B cell (primary cell): ENCODE measurements at regions of chr12 and their contacts with region 1.

Region 1: GRCh38 chr12:52023182-52023975 is 16.6 kb downstream of the TAMALIN start:
- DNase-seq: peak; percentile 93
- ATAC-seq: peak; percentile 71
- H3K4me3 ChIP-seq: peak overlapping the region in 4 of 5 experiments; percentile 53 to 77 (median 60)
- H3K4me3 Mint-ChIP-seq: peak overlapping the region; percentile 88
- H3K27ac ChIP-seq: peak overlapping the region in 1 of 2 donors; percentile 31
- H3K27ac Mint-ChIP-seq: peak overlapping the region; percentile 53
- H3K4me1 ChIP-seq: peaks cover 35 to 56% of the 10 kb centered on the region in 2 donors
- H3K4me1 Mint-ChIP-seq: peaks cover 52% of the 10 kb centered on the region
- H3K27me3 ChIP-seq: no peaks in the 10 kb centered on the region
- H3K27me3 Mint-ChIP-seq: no peaks in the 10 kb centered on the region
- CTCF ChIP-seq: peak; percentile 93

Region 2: DNA sequence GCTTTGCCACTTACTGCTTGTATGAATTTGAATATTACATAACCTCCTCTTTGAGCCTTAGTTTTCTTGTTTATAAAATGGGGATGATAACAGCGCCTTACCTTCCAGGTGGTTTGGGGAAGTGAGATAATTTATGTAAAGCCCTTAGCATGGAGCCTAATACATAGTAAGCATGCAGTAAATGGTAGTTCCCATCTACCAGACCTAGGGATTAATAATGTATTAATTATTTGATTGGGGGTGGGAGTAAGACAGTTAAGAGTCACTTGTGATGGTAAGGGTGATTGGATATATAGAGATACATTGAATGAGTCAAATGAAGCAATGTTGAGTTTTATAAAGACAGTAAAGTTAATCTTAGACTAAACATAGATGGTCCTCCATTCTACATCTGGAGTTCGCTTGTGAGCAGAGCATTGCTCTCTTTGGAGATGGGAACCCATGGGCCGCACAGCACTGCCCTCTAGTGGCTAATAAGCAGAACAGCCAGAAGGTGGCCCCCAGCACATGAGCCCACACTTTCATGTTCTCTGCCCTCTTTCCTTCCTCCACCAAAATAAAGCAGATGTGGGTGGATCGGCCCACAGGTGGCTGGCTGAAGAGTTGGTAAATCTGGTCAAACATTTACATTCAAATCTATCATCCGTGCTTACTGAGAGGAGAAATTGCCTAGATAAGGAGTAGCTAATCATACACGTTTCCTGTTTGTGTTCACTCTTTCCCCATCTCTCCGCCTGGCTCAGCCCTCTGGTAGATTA is 43.1 kb before region 1 on chr12:
- CTCF ChIA-PET with region 1: interaction called, 707 read pairs
- POLR2A ChIA-PET with region 1: interaction called, 7 read pairs
- intact Hi-C with region 1: no loop called
- DNase-seq: peak; percentile 84
- ATAC-seq: peak; percentile 97
- H3K4me3 ChIP-seq: no peak overlapping the region
- H3K4me3 Mint-ChIP-seq: no peak overlapping the region
- H3K27ac ChIP-seq: no peak overlapping the region
- H3K27ac Mint-ChIP-seq: no peak overlapping the region
- H3K4me1 ChIP-seq: peaks cover 3 to 6% of the 10 kb centered on the region in 2 donors
- H3K4me1 Mint-ChIP-seq: peaks cover 10% of the 10 kb centered on the region
- H3K27me3 ChIP-seq: no peaks in the 10 kb centered on the region
- H3K27me3 Mint-ChIP-seq: no peaks in the 10 kb centered on the region
- CTCF ChIP-seq: peak; percentile 94

Region 3: GRCh38 chr12:52004042-52004648 is 19.2 kb before region 1 on chr12:
- CTCF ChIA-PET with region 1: interaction called, 707 read pairs
- POLR2A ChIA-PET with region 1: interaction called, 28 read pairs
- intact Hi-C with region 1: loop called (anchors 1 kb)
- DNase-seq: peak; percentile 51
- ATAC-seq: no peak
- H3K4me3 ChIP-seq: no peak overlapping the region
- H3K4me3 Mint-ChIP-seq: no peak overlapping the region
- H3K27ac ChIP-seq: no peak overlapping the region
- H3K27ac Mint-ChIP-seq: no peak overlapping the region
- H3K4me1 ChIP-seq: peaks cover 26 to 32% of the 10 kb centered on the region in 2 donors
- H3K4me1 Mint-ChIP-seq: peaks cover 37% of the 10 kb centered on the region
- H3K27me3 ChIP-seq: no peaks in the 10 kb centered on the region
- H3K27me3 Mint-ChIP-seq: no peaks in the 10 kb centered on the region
- CTCF ChIP-seq: peak; percentile 3

Region 4: DNA sequence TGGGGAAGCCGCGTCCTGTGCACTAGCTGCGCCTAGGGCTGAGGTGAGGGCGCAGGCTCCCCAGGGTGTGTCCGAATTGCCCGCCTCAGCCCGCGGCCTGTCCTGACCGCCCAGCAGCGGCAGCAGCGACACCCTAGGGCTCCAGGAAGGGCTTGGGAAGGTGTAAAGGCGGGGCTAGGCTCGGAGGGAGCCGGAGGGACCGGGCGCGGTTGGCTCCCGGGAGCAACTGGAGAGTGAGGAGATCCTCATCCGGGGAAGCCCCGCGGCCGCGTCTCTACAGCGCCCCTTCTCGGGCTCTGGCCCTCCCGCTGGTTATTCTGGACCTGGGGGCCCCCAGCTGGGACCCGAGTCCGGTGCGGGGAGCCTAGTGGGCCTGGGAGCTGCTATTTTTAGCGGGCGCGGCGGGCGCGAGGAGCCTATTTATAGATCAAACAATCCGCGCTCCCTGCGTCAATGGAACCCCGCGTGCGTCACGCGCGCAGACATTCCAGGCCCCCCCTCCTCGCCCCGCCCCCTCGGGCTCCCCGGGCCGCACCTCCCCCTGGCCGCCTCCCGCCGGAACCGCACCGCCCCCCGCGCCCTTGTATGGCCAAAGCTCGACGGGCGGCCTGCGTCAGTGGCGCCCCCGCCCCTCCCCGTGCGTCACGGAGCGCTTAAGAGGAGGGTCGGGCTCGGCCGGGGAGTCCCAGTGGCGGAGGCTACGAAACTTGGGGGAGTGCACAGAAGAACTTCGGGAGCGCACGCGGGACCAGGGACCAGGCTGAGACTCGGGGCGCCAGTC is 27.6 kb after region 1 on chr12 and contains the start of gene NR4A1:
- CTCF ChIA-PET with region 1: interaction called, 49 read pairs
- POLR2A ChIA-PET with region 1: interaction called, 17 read pairs
- intact Hi-C with region 1: loop called (anchors 1 kb)
- DNase-seq: peak; percentile 99
- ATAC-seq: peak; percentile 80
- H3K4me3 ChIP-seq: peak within 1 kb of the TSS; percentile 73 to 92 (median 86)
- H3K4me3 Mint-ChIP-seq: peak within 1 kb of the TSS; percentile 100
- H3K27ac ChIP-seq: peak within 1 kb of the TSS; percentile 99 to 100
- H3K27ac Mint-ChIP-seq: peak within 1 kb of the TSS; percentile 99
- H3K4me1 ChIP-seq: peaks cover 25 to 38% of the 10 kb centered on the region in 2 donors
- H3K4me1 Mint-ChIP-seq: peaks cover 45% of the 10 kb centered on the region
- H3K27me3 ChIP-seq: no peaks in the 10 kb centered on the region
- H3K27me3 Mint-ChIP-seq: no peaks in the 10 kb centered on the region
- CTCF ChIP-seq: no peak
- total RNA-seq, gene NR4A1: 43.2 and 52.8 TPM in 2 replicates

Region 5: GRCh38 chr12:52082988-52083637 is 59.7 kb after region 1 on chr12:
- CTCF ChIA-PET with region 1: interaction called, 1,315 read pairs
- POLR2A ChIA-PET with region 1: interaction called, 14 read pairs
- intact Hi-C with region 1: loop called (anchors 1 kb)
- DNase-seq: peak; percentile 80
- ATAC-seq: peak; percentile 53
- H3K4me3 ChIP-seq: no peak overlapping the region
- H3K4me3 Mint-ChIP-seq: peak overlapping the region; percentile 74
- H3K27ac ChIP-seq: no peak overlapping the region
- H3K27ac Mint-ChIP-seq: peak overlapping the region; percentile 75
- H3K4me1 ChIP-seq: peaks cover 35 to 41% of the 10 kb centered on the region in 2 donors
- H3K4me1 Mint-ChIP-seq: peaks cover 37% of the 10 kb centered on the region
- H3K27me3 ChIP-seq: peaks cover 0 to 8% (median 0%) of the 10 kb centered on the region in 4 experiments
- H3K27me3 Mint-ChIP-seq: peaks cover 5% of the 10 kb centered on the region
- CTCF ChIP-seq: peak; percentile 98

Region 6: DNA sequence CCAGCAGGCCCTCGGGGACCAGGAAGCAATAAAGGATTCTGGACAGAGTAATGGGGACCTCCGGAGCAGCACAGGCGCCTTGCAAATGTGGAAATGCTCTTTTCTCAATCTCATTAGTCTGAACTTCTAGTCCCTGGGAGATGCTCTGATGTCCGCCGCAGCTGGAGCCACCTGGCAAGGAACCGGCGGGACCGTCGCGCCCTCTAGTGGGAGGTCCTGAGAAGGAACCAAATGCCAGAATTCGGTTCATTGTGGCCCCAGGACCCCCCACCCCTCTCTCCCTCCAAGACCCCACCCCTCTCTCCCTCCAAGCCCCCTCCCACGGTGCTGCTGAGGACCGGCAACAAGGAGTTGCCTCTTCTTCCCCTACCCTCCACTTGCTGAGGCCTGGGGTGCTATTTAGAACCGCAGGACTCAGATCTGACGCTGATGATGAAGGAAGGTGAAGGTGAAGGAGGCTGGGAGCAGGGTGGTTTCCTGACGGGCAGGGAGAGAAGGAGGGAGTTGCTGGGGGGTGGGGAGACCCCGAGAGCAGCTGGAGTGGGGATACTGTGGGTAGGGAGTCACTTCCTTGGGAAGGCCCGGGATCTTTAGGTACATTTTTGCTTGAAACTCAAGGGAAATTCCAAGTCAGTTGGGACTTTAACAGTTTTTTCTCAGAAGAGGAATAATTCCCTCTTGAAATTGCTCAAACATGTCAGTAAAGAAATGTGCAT is 98.6 kb after region 1 on chr12:
- CTCF ChIA-PET with region 1: interaction called, 407 read pairs
- POLR2A ChIA-PET with region 1: interaction called, 5 read pairs
- intact Hi-C with region 1: loop called (anchors 1 kb)
- DNase-seq: peak; percentile 73
- ATAC-seq: no peak
- H3K4me3 ChIP-seq: no peak overlapping the region
- H3K4me3 Mint-ChIP-seq: no peak overlapping the region
- H3K27ac ChIP-seq: no peak overlapping the region
- H3K27ac Mint-ChIP-seq: peak overlapping the region; percentile 74
- H3K4me1 ChIP-seq: peaks cover 25 to 36% of the 10 kb centered on the region in 2 donors
- H3K4me1 Mint-ChIP-seq: peaks cover 38% of the 10 kb centered on the region
- H3K27me3 ChIP-seq: peaks cover 0 to 28% (median 8%) of the 10 kb centered on the region in 4 experiments
- H3K27me3 Mint-ChIP-seq: peaks cover 10% of the 10 kb centered on the region
- CTCF ChIP-seq: peak; percentile 87

Region 7: DNA sequence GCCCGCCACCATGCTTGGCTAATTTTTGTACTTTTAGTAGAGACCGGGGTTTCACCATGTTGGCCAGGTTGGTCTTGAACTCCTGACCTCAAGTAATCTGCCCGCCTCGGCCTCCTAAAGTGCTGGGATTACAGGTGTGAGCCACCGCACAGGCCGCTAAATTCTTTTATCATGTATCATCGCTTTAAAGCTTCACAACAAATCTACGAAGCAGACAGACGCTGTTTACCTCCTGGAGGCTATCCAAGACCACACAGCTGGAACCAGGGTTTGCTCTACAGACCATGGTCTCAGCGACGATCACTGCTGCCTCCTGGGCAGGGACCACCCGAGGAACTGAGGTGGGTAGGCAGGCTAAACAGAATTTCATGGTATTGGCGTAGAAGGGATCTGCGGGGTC is 141.2 kb after region 1 on chr12:
- CTCF ChIA-PET with region 1: no interaction called
- POLR2A ChIA-PET with region 1: no interaction called
- intact Hi-C with region 1: no loop called
- DNase-seq: no peak
- ATAC-seq: no peak
- H3K4me3 ChIP-seq: no peak overlapping the region
- H3K4me3 Mint-ChIP-seq: no peak overlapping the region
- H3K27ac ChIP-seq: no peak overlapping the region
- H3K27ac Mint-ChIP-seq: no peak overlapping the region
- H3K4me1 ChIP-seq: no peaks in the 10 kb centered on the region
- H3K4me1 Mint-ChIP-seq: no peaks in the 10 kb centered on the region
- H3K27me3 ChIP-seq: peaks cover 0 to 6% (median 0%) of the 10 kb centered on the region in 4 experiments
- H3K27me3 Mint-ChIP-seq: peaks cover 24% of the 10 kb centered on the region
- CTCF ChIP-seq: no peak

Region 8: GRCh38 chr12:53313996-53314395 is 1290.6 kb after region 1 on chr12:
- CTCF ChIA-PET with region 1: no interaction called
- POLR2A ChIA-PET with region 1: no interaction called
- intact Hi-C with region 1: no loop called
- DNase-seq: no peak
- ATAC-seq: no peak
- H3K4me3 ChIP-seq: no peak overlapping the region
- H3K4me3 Mint-ChIP-seq: no peak overlapping the region
- H3K27ac ChIP-seq: no peak overlapping the region
- H3K27ac Mint-ChIP-seq: no peak overlapping the region
- H3K4me1 ChIP-seq: peaks cover 0 to 3% of the 10 kb centered on the region in 2 donors
- H3K4me1 Mint-ChIP-seq: peaks cover 8% of the 10 kb centered on the region
- H3K27me3 ChIP-seq: no peaks in the 10 kb centered on the region
- H3K27me3 Mint-ChIP-seq: no peaks in the 10 kb centered on the region
- CTCF ChIP-seq: no peak